Mammary epithelial cell (primary cell): ENCODE measurements at regions of chr16 and their contacts with region 1.

Region 1: DNA sequence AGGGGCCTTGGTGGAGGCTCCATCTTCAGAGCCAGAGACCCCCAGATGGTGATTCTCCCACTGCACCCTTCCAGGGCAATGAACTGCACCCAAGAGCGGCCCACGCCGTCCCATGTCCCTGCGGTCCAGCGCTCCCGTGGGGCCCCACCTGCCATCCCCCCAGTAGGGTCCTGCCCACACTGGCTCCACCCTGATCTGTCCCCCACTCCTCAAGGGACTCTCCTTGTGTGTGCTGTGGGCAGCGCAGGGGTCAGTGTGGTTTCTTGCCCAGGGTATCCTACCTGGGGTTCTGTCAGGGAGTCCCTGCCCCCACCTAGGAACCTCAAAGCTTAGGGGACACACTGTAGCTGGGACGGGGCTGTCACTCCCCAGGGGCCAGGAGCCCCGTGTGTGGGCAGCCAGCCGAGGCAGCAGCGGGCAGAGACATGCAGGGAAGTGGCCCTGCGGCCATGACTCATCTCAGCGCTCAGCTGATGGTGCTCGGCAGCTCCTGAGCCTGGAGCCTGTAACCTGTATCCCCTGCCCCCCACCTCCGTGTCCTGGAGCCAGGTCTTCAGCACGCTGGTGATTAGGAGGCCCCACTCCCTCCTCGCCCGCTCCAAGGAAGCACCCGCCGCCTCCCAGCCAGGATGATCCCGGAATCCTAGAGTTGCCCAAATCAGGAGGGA is 35.7 kb upstream of the SSTR5 start:
- DNase-seq: peak; percentile 75
- H3K4me3 ChIP-seq: peak overlapping the region in 1 of 3 experiments; percentile 9
- H3K27ac ChIP-seq: no peak overlapping the region
- H3K4me1 ChIP-seq: peaks cover 14% of the 10 kb centered on the region
- H3K27me3 ChIP-seq: no peaks in the 10 kb centered on the region
- CTCF ChIP-seq: no peak

Region 2: DNA sequence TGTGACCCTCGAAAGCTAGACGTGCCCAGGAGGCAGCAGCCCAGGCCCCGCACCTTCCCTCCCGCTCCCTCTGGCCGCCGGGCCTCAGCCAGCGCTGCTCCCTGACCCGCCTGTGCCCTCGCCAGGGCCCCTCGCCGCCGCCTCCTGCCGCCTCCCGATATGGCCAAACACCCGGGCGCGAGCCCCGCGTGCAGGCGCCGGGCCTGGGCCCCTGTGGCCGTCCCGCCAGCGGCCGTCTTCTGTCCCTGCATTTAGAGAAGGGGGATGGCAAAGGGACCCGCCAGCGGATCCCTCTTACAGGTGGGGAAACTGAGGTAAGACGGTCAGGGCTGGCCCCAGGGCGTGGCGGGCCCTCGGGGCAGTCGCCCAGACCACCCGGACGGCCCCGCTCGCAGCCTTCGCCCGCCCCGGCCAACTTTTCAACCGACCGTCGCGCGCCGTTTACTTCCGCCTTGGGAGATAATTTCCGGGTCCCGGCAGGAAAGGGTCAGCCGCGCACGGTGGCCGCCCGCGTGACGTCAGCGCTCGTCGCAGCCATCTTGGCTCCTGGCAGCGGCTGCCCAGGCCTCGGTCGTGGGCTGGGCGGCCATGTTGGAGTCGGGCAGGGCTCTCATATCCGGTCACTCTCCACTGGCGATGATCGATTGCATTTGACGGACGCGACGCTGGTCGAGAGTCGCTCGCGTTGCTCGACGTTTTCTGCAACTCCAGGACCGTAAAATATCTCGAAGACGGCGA is 229.3 kb before region 1 on chr16:
- CTCF ChIA-PET with region 1: no interaction called
- dilution Hi-C with region 1: no loop called
- in situ Hi-C with region 1: loop called (anchors 10 to 25 kb)
- intact Hi-C with region 1: loop called (anchors 5 kb)
- DNase-seq: peak; percentile 85
- H3K4me3 ChIP-seq: peak overlapping the region; percentile 62 to 69 (median 64)
- H3K27ac ChIP-seq: peak overlapping the region; percentile 62
- H3K4me1 ChIP-seq: no peaks in the 10 kb centered on the region
- H3K27me3 ChIP-seq: peaks cover 2% of the 10 kb centered on the region
- CTCF ChIP-seq: no peak

Region 3: DNA sequence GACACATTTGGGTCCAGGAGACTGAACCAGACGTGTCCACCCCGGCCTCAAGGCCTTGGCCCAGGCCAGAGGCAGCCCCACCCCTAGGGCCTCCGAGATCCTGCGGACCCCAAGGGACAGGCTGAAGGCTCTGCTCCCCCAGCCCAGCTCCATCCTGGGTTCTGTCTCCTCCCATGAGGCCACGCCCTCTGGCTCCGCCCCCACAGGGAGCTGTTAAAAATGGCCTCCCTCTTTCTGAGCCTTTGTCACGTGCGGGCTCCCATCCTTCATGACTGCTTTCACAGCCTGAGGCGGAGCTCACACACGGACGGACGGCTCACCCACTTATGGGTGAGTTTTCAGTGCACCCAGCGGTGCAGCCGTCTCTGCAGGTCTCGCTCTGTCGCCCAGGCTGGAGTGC is 109.5 kb after region 1 on chr16:
- CTCF ChIA-PET with region 1: no interaction called
- dilution Hi-C with region 1: loop called (anchors 5 kb)
- in situ Hi-C with region 1: no loop called
- intact Hi-C with region 1: no loop called
- DNase-seq: no peak
- H3K4me3 ChIP-seq: no peak overlapping the region
- H3K27ac ChIP-seq: no peak overlapping the region
- H3K4me1 ChIP-seq: no peaks in the 10 kb centered on the region
- H3K27me3 ChIP-seq: no peaks in the 10 kb centered on the region
- CTCF ChIP-seq: no peak

Region 4: DNA sequence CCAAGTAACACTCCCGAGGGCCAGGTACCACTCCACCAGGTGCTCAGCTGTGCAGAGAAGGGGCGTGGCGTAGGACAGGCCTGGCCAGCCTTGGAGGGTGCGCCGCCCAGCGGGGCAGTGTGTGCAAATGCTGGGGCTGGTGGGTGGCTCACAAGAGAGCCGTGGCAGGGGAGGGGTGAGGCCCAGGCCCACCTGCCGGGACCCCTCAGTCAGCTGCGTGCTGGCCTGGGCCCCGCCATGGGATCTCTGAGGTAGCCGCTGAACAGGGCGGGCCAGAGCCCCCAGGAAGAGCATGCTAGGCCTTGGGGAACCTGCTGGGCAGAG is 179.4 kb after region 1 on chr16:
- CTCF ChIA-PET with region 1: no interaction called
- dilution Hi-C with region 1: loop called (anchors 10 kb)
- in situ Hi-C with region 1: no loop called
- intact Hi-C with region 1: no loop called
- DNase-seq: no peak
- H3K4me3 ChIP-seq: no peak overlapping the region
- H3K27ac ChIP-seq: no peak overlapping the region
- H3K4me1 ChIP-seq: no peaks in the 10 kb centered on the region
- H3K27me3 ChIP-seq: peaks cover 2% of the 10 kb centered on the region
- CTCF ChIP-seq: no peak